ENCODE measurements at regions of chr1 and their contacts with region 1.

Region 1: GRCh38 chr1:61270761-61271411 is 188.5 kb downstream of the NFIA start:
- DNase-seq: no peak
- H3K4me3 Mint-ChIP-seq: no peak overlapping the region
- H3K27ac Mint-ChIP-seq: peak overlapping the region; percentile 72
- H3K4me1 Mint-ChIP-seq: peaks cover 19% of the 10 kb centered on the region
- H3K27me3 Mint-ChIP-seq: peaks cover 10% of the 10 kb centered on the region

Region 2: GRCh38 chr1:61301824-61302657 is 31.2 kb after region 1 on chr1:
- intact Hi-C with region 1: loop called (anchors 2 kb)
- DNase-seq: no peak
- H3K4me3 Mint-ChIP-seq: no peak overlapping the region
- H3K27ac Mint-ChIP-seq: peak overlapping the region; percentile 54
- H3K4me1 Mint-ChIP-seq: peaks cover 17% of the 10 kb centered on the region
- H3K27me3 Mint-ChIP-seq: peaks cover 17% of the 10 kb centered on the region

Region 3: GRCh38 chr1:61318319-61319125 is 47.6 kb after region 1 on chr1:
- intact Hi-C with region 1: loop called (anchors 1 kb)
- DNase-seq: no peak
- H3K4me3 Mint-ChIP-seq: peak overlapping the region; percentile 53
- H3K27ac Mint-ChIP-seq: peak overlapping the region; percentile 88
- H3K4me1 Mint-ChIP-seq: peaks cover 28% of the 10 kb centered on the region
- H3K27me3 Mint-ChIP-seq: peaks cover 17% of the 10 kb centered on the region

Region 4: GRCh38 chr1:61332196-61332753 is 61.4 kb after region 1 on chr1:
- intact Hi-C with region 1: loop called (anchors 1 kb)
- DNase-seq: no peak
- H3K4me3 Mint-ChIP-seq: no peak overlapping the region
- H3K27ac Mint-ChIP-seq: peak overlapping the region; percentile 29
- H3K4me1 Mint-ChIP-seq: peaks cover 17% of the 10 kb centered on the region
- H3K27me3 Mint-ChIP-seq: peaks cover 38% of the 10 kb centered on the region

Region 5: GRCh38 chr1:61368876-61369275 is 98.0 kb after region 1 on chr1:
- intact Hi-C with region 1: no loop called
- DNase-seq: no peak
- H3K4me3 Mint-ChIP-seq: no peak overlapping the region
- H3K27ac Mint-ChIP-seq: no peak overlapping the region
- H3K4me1 Mint-ChIP-seq: no peaks in the 10 kb centered on the region
- H3K27me3 Mint-ChIP-seq: peaks cover 7% of the 10 kb centered on the region

Measured in activated T-helper 2 cell treated with anti-CD3 and anti-CD28 coated beads, Interferon-gamma antibody, Interleukin-2, Interleukin-4, amounts not matched to agents 10 μg/mL and 5 μg/mL and 100 μg/mL, durations not matched to agents 14 hours and 24 hours and 36 hours (primary cell).